Naive thymus-derived CD4-positive, alpha-beta T cell (primary cell): ENCODE measurements at regions of chr4 and their contacts with region 1.

Region 1: DNA sequence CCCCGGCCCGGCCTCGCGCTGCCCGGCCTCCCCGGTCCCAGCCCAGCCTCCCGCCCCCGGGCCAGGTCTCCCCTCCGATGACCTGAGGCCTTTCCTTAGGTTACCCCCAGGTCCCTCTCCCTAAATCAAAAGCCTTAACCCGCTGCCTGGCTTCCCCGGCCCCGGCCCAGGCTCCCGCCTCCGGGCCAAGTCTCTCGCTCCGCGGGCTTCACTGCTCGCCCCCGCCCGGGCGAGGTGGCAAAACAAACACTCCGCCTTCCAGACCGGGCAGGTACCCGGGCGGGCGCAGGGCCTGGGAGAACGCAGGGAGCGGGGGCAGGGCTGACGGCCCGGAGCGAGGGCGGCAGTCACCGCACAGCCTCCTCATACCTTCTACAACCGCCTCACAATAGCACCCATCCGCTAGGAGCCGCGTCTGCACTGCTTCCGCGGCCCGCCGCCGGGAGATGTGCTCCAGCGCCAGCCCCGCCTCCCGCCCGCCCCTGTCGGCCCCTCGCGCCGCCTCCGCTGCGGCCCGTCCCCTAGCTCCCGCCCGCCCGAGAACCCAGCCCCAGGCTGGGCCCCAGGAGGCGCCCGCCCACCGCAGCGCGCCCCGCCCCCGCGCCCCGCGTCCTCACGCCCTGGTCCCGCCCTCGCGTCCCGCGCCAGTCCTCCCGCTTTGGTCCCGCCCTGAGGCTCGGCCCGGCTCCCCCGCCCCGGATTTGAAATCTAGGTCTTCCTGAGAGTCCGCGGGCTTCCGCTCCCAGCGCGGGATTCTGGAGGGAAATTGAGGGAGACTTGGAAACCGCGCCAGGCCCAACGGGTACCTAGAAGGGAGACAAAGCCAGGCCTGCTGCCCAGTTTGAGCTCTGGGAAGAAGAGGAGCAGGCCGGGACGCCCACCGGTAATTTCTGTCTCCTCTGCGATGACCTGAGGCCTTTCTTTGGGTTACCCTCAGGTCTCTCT is at the starts of genes CASP3 and PRIMPOL:
- DNase-seq: peak; percentile 90 to 98 (median 93)
- ATAC-seq: peak; percentile 96
- H3K4me3 ChIP-seq: peak within 1 kb of the TSS; percentile 92
- H3K4me3 Mint-ChIP-seq: peak within 1 kb of the TSS; percentile 92 to 99 (median 97)
- H3K27ac ChIP-seq: peak within 1 kb of the TSS; percentile 91
- H3K27ac Mint-ChIP-seq: peak within 1 kb of the TSS; percentile 91 to 97 (median 95)
- H3K4me1 ChIP-seq: peaks cover 26 to 37% of the 10 kb centered on the region in 2 donors
- H3K4me1 Mint-ChIP-seq: peaks cover 47 to 69% (median 54%) of the 10 kb centered on the region in 7 donors
- H3K27me3 ChIP-seq: no peaks in the 10 kb centered on the region
- H3K27me3 Mint-ChIP-seq: no peaks in the 10 kb centered on the region
- total RNA-seq, gene CASP3: 12.4 to 73.4 (median 17.2) TPM
- total RNA-seq, gene PRIMPOL: 12.1 to 19.3 (median 16.7) TPM

Region 2: DNA sequence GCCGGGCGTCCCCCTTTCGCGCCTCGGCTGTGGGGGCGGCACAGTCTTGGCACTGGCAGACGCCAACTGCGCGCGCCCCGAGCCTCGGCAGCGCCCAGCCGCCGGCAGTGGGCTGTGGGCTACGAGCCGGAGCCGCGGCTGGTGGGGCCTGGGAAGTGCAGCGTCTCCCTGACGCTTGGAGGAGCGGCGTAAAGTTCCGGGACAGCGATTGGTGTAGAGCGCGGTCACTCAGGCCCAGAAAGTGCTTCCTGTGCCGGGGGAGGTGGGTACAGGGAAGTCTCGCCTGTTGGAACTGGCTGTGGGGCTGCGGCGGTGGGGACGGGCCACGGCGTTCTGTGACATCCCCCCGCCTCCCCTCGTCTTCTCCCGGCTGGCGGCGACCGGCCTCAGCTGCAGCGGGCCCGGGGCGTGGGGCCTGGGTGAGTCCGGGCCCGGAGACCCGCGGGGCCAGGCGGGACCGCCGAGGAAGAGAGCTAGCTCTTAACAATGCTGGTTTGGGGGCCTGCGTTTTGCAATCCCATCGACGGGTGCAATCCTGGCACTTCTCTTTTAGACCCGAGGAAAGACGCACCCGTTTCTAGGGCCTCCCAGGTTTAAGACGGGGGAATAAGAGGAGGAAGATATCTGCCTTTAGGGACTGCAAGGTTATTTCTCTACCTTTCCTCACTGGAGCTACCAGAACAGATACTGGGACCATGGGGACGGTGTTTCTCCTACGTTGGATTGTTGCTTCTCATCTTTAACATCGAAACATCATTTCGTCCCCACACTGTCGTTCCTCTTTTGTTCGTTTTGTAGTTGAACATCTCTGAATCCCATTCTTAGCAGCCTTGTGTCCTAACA is 990.0 kb before region 1 on chr4 and contains the starts of genes RWDD4 and TRAPPC11:
- CTCF ChIA-PET with region 1: no interaction called
- POLR2A ChIA-PET with region 1: no interaction called
- intact Hi-C with region 1: loop called (anchors 1 kb)
- DNase-seq: peak; percentile 83 to 97 (median 95)
- ATAC-seq: peak; percentile 99
- H3K4me3 ChIP-seq: peak within 1 kb of the TSS; percentile 87
- H3K4me3 Mint-ChIP-seq: peak within 1 kb of the TSS; percentile 91 to 98 (median 96)
- H3K27ac ChIP-seq: peak within 1 kb of the TSS; percentile 96
- H3K27ac Mint-ChIP-seq: peak within 1 kb of the TSS; percentile 90 to 99 (median 95)
- H3K4me1 ChIP-seq: peaks cover 14 to 19% of the 10 kb centered on the region in 2 donors
- H3K4me1 Mint-ChIP-seq: peaks cover 35 to 48% (median 38%) of the 10 kb centered on the region in 7 donors
- H3K27me3 ChIP-seq: no peaks in the 10 kb centered on the region
- H3K27me3 Mint-ChIP-seq: no peaks in the 10 kb centered on the region
- total RNA-seq, gene RWDD4: 9.3 to 15.8 (median 11.6) TPM
- total RNA-seq, gene TRAPPC11: 26.3 to 48.8 (median 35.6) TPM

Region 3: DNA sequence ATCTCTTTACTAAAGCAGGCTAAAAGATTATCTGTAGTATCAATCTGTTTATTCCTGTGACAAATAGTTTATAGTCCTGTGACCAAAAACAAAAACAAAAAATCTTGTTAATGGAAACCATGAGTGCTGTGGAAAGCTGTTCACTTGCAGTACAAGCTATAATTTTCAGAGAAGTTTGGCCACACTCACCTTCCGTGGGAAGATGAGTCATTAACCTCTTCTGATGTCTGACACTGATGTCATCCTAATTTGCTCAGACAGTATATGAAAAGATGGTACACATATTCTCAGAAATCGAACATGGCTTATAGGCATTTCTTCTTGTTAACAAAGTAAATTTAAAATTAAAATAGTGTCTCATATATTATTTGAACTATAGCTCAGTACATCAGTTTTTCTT is 411.7 kb before region 1 on chr4:
- CTCF ChIA-PET with region 1: no interaction called
- POLR2A ChIA-PET with region 1: no interaction called
- intact Hi-C with region 1: no loop called
- DNase-seq: peak in 1 of 9 donors; percentile 31
- ATAC-seq: peak; percentile 45
- H3K4me3 ChIP-seq: no peak overlapping the region
- H3K4me3 Mint-ChIP-seq: peak overlapping the region in 1 of 10 donors; percentile 80
- H3K27ac ChIP-seq: no peak overlapping the region
- H3K27ac Mint-ChIP-seq: peak overlapping the region in 4 of 9 donors; percentile 19 to 93 (median 27)
- H3K4me1 ChIP-seq: no peaks in the 10 kb centered on the region
- H3K4me1 Mint-ChIP-seq: peaks cover 0 to 51% (median 8%) of the 10 kb centered on the region in 7 donors
- H3K27me3 ChIP-seq: no peaks in the 10 kb centered on the region
- H3K27me3 Mint-ChIP-seq: no peaks in the 10 kb centered on the region

Region 4: DNA sequence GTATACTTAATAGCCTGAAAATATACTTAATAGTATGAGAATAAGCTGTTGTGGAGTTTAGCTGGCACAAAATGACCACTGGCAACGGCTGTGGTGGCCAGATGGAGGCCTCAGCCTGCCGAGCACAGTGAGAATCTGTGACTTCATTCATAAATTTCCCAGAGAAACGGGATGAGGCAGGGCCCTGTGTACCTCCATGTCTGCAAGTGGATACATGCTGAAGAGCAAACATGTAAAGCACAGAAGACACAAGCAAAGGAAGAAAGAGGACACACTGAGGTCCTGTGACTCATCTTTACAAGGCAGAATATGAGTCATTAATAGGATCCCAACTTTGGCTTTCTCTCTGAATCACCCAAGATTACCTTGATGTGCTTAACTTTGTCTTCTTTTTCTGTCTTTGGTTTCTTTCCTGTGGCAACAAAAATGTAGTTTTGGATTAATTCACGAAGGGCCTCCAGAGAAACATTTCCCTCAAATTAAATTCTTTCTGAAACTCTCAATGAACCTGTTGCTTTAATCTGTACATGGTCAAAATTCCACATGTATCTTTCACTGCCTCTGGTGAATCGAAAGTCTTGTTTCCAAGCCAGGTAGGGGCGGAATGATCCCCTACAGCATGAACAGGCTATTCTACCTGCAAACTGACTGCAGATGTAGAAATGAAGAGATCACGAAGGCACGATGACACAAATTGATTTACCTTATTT is 231.3 kb before region 1 on chr4:
- CTCF ChIA-PET with region 1: no interaction called
- POLR2A ChIA-PET with region 1: no interaction called
- intact Hi-C with region 1: loop called (anchors 1 to 5 kb)
- DNase-seq: peak in 2 of 9 donors; percentile 26 to 31
- ATAC-seq: peak; percentile 69
- H3K4me3 ChIP-seq: peak overlapping the region; percentile 64
- H3K4me3 Mint-ChIP-seq: peak overlapping the region; percentile 23 to 94 (median 82)
- H3K27ac ChIP-seq: peak overlapping the region; percentile 74
- H3K27ac Mint-ChIP-seq: peak overlapping the region; percentile 82 to 97 (median 95)
- H3K4me1 ChIP-seq: peaks cover 35 to 52% of the 10 kb centered on the region in 2 donors
- H3K4me1 Mint-ChIP-seq: peaks cover 43 to 80% (median 77%) of the 10 kb centered on the region in 7 donors
- H3K27me3 ChIP-seq: no peaks in the 10 kb centered on the region
- H3K27me3 Mint-ChIP-seq: no peaks in the 10 kb centered on the region

Region 5: DNA sequence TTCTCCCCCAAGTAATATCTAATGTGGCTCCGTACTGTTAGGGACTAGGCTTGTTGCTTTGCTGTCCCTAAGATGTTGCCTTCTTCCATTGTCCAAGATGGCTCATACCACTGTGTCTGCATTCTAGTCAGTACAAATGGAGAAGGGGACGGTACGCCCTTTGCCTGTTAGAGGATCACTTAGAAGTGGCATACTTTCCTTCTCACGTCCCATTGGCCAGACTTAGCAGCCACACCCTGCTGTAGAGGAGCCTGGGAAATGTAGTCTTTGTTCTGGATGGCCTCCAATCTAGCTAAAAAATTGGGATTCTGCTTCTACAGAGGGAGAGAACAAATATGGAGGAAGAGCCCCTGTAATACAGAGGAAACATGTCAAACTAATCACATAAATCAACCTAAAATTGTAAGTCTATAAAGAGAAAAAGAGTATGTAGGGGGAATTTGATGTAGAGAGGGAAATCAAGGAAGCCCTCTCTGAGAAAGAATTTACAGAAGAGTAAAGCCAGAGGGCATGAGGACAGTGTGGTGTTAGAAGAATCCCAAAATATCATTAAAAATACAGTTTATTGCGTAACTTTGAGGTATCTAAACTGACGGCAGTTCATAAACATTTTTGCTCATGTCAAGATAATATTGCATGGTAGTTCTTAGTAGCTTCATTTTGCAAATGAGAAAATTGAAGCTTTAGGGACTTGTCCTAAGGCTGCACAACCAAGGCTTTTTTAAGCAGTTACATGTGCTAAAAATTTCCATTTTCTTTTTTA is 15.3 kb after region 1 on chr4:
- CTCF ChIA-PET with region 1: interaction called, 3 read pairs
- POLR2A ChIA-PET with region 1: interaction called, 4 read pairs
- intact Hi-C with region 1: loop called (anchors 1 kb)
- DNase-seq: no peak
- ATAC-seq: peak; percentile 49
- H3K4me3 ChIP-seq: no peak overlapping the region
- H3K4me3 Mint-ChIP-seq: no peak overlapping the region
- H3K27ac ChIP-seq: no peak overlapping the region
- H3K27ac Mint-ChIP-seq: no peak overlapping the region
- H3K4me1 ChIP-seq: peaks cover 6 to 19% of the 10 kb centered on the region in 2 donors
- H3K4me1 Mint-ChIP-seq: peaks cover 13 to 31% (median 20%) of the 10 kb centered on the region in 7 donors
- H3K27me3 ChIP-seq: no peaks in the 10 kb centered on the region
- H3K27me3 Mint-ChIP-seq: no peaks in the 10 kb centered on the region

Region 6: DNA sequence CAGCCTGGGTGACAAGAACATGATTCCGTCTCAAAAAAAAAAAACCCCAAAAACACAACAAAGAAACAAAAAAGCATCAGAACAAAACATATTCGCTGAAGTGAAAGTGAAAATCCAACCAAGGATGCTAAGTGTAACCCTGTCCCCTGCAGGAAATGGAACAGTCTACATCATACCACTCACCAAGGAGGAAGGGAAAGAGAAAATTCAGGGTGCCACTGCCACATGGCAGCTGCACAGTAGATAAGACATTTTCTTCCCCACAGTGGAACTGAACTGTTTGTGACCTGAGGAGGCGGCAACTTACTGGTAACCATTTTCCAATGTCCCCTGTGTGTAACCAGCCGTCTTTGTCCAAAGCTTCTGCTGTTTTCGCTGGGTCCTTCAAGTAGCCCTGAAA is 112.8 kb after region 1 on chr4:
- CTCF ChIA-PET with region 1: no interaction called
- POLR2A ChIA-PET with region 1: interaction called, 4 read pairs
- intact Hi-C with region 1: loop called (anchors 1 kb)
- DNase-seq: peak in 8 of 9 donors; percentile 38 to 84 (median 75)
- ATAC-seq: peak; percentile 96
- H3K4me3 ChIP-seq: no peak overlapping the region
- H3K4me3 Mint-ChIP-seq: peak overlapping the region; percentile 6 to 78 (median 66)
- H3K27ac ChIP-seq: peak overlapping the region; percentile 36
- H3K27ac Mint-ChIP-seq: peak overlapping the region; percentile 83 to 94 (median 87)
- H3K4me1 ChIP-seq: peaks cover 5 to 14% of the 10 kb centered on the region in 2 donors
- H3K4me1 Mint-ChIP-seq: peaks cover 0 to 23% (median 20%) of the 10 kb centered on the region in 7 donors
- H3K27me3 ChIP-seq: no peaks in the 10 kb centered on the region
- H3K27me3 Mint-ChIP-seq: no peaks in the 10 kb centered on the region

Region 7: DNA sequence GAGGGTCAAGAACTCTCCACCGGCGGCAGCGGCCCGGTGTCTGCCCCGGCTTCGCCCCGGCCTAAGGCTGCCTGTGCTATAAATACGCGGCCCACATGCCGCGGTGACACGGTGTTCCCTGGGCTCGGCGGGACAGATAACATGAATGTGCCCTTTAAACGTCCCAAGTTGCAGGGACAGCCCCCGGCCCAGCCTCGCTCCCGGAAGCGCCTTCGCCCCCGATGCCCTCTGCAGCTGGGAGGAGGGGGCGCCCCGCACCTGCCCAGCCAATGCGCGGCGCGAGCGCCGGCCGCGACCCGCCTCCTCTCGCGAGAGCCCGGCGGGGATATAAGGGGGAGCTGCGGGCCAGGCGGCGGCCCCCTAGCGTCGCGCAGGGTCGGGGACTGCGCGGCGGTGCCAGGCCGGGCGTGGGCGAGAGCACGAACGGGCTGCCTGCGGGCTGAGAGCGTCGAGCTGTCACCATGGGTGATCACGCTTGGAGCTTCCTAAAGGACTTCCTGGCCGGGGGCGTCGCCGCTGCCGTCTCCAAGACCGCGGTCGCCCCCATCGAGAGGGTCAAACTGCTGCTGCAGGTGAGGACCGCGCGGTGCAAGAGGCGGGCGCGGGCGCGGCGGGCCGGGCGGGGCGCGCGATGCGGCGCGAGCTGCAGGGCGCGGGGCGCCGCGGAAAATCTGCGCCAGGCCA is 493.8 kb after region 1 on chr4 and contains the start of gene SLC25A4:
- CTCF ChIA-PET with region 1: no interaction called
- POLR2A ChIA-PET with region 1: no interaction called
- intact Hi-C with region 1: loop called in 1 of 2 experiments (anchors 1 kb)
- DNase-seq: peak; percentile 68 to 81 (median 75)
- ATAC-seq: peak; percentile 95
- H3K4me3 ChIP-seq: peak within 1 kb of the TSS; percentile 57
- H3K4me3 Mint-ChIP-seq: peak within 1 kb of the TSS; percentile 84 to 95 (median 90)
- H3K27ac ChIP-seq: peak within 1 kb of the TSS; percentile 52
- H3K27ac Mint-ChIP-seq: peak within 1 kb of the TSS in 7 of 9 donors; percentile 4 to 89 (median 83)
- H3K4me1 ChIP-seq: peaks cover 4 to 13% of the 10 kb centered on the region in 2 donors
- H3K4me1 Mint-ChIP-seq: peaks cover 11 to 15% (median 12%) of the 10 kb centered on the region in 7 donors
- H3K27me3 ChIP-seq: peaks cover 0 to 3% of the 10 kb centered on the region in 2 donors
- H3K27me3 Mint-ChIP-seq: peaks cover 15 to 69% (median 26%) of the 10 kb centered on the region in 5 donors
- total RNA-seq, gene SLC25A4: 0.60 to 7.2 (median 4.9) TPM

Region 8: GRCh38 chr4:185471235-185472102 is 822.2 kb after region 1 on chr4 and contains the start of gene CCDC110:
- CTCF ChIA-PET with region 1: no interaction called
- POLR2A ChIA-PET with region 1: no interaction called
- intact Hi-C with region 1: loop called in 1 of 2 experiments (anchors 1 kb)
- DNase-seq: peak; percentile 72 to 89 (median 86)
- ATAC-seq: peak; percentile 99
- H3K4me3 ChIP-seq: peak within 1 kb of the TSS; percentile 61
- H3K4me3 Mint-ChIP-seq: peak within 1 kb of the TSS; percentile 87 to 98 (median 92)
- H3K27ac ChIP-seq: peak within 1 kb of the TSS; percentile 65
- H3K27ac Mint-ChIP-seq: peak within 1 kb of the TSS; percentile 5 to 90 (median 86)
- H3K4me1 ChIP-seq: peaks cover 0 to 3% of the 10 kb centered on the region in 2 donors
- H3K4me1 Mint-ChIP-seq: peaks cover 5 to 18% (median 9%) of the 10 kb centered on the region in 7 donors
- H3K27me3 ChIP-seq: no peaks in the 10 kb centered on the region
- H3K27me3 Mint-ChIP-seq: peaks cover 0 to 52% (median 6%) of the 10 kb centered on the region in 5 donors
- total RNA-seq, gene CCDC110: 0.42 to 1.8 (median 0.76) TPM in 4 of 5 experiments, not detected in the other